Mammary epithelial cell (primary cell): ENCODE measurements at regions of chr11 and their contacts with region 1.

Region 1: DNA sequence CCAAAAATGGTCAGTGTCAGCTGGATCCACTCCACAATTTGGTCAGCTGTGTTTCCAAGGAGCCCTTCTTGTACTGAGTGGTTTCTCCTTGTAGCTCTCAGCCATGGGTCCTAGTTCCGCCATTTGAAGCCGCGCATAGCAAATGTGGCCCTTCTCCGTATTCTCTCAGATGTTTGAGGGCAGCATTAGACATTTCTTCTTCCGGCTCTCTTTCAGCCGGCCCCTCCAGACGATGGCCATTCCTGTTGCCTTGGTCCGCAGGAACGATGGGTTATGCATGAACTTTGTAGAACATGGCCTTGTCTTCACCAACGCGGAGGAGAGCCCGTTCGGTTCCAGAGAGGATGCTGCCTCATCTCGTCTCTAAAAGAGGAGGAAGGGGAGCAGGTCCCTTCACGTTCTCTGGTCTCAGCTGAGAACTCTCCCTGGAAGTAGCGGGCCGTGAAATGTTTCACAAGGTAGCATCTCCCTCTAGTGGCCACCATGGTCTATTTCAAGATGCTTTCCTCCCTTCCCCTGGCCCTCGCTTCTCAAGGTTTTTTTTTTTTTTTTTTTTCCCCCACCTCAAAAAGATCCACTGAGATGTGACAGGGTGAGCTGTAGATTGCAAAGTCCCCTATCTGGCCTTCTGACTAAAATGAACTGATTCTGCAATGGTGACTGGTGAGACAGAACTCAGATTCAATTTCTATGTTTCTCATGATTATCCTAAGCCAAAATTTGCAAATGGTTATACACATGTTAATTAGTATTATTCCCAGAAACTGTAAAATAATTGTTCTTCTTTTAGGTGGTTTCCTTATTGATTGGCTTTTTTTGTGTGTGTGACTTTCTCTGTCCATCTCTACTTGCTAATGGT is 19.8 kb upstream of the PLET1 start:
- DNase-seq: peak; percentile 68
- H3K4me3 ChIP-seq: peak overlapping the region; percentile 31 to 45 (median 39)
- H3K27ac ChIP-seq: no peak overlapping the region
- H3K4me1 ChIP-seq: peaks cover 12% of the 10 kb centered on the region
- H3K27me3 ChIP-seq: no peaks in the 10 kb centered on the region
- CTCF ChIP-seq: peak; percentile 74 to 86

Region 2: GRCh38 chr11:111878849-111879636 is 401.5 kb before region 1 on chr11 and contains the starts of genes CFAP68 and FDXACB1:
- CTCF ChIA-PET with region 1: no interaction called
- dilution Hi-C with region 1: no loop called
- in situ Hi-C with region 1: no loop called
- intact Hi-C with region 1: loop called (anchors 1 kb)
- DNase-seq: peak; percentile 98
- H3K4me3 ChIP-seq: peak within 1 kb of the TSS; percentile 69 to 91 (median 73)
- H3K27ac ChIP-seq: peak within 1 kb of the TSS; percentile 99
- H3K4me1 ChIP-seq: peaks cover 8% of the 10 kb centered on the region
- H3K27me3 ChIP-seq: no peaks in the 10 kb centered on the region
- CTCF ChIP-seq: peak; percentile 90 to 95
- total RNA-seq, gene CFAP68: 12.5 to 23.7 TPM
- total RNA-seq, gene FDXACB1: 0.96 to 2.3 TPM

Region 3: GRCh38 chr11:112086422-112087191 is 193.9 kb before region 1 on chr11 and contains the starts of genes SDHD and TIMM8B:
- CTCF ChIA-PET with region 1: no interaction called
- dilution Hi-C with region 1: no loop called
- in situ Hi-C with region 1: no loop called
- intact Hi-C with region 1: loop called (anchors 1 kb)
- DNase-seq: peak; percentile 95
- H3K4me3 ChIP-seq: peak within 1 kb of the TSS; percentile 93 to 98 (median 93)
- H3K27ac ChIP-seq: peak within 1 kb of the TSS; percentile 80
- H3K4me1 ChIP-seq: peaks cover 10% of the 10 kb centered on the region
- H3K27me3 ChIP-seq: no peaks in the 10 kb centered on the region
- CTCF ChIP-seq: peak in 1 of 2 donors; percentile 46
- total RNA-seq, gene SDHD: 57.7 to 58.5 TPM
- total RNA-seq, gene TIMM8B: 21.8 to 58.7 TPM

Region 4: GRCh38 chr11:112174789-112175598 is 105.5 kb before region 1 on chr11 and contains the start of gene BCO2:
- CTCF ChIA-PET with region 1: no interaction called
- dilution Hi-C with region 1: no loop called
- in situ Hi-C with region 1: no loop called
- intact Hi-C with region 1: loop called (anchors 1 kb)
- DNase-seq: peak; percentile 85
- H3K4me3 ChIP-seq: peak within 1 kb of the TSS; percentile 26 to 56 (median 47)
- H3K27ac ChIP-seq: peak within 1 kb of the TSS; percentile 88
- H3K4me1 ChIP-seq: peaks cover 10% of the 10 kb centered on the region
- H3K27me3 ChIP-seq: no peaks in the 10 kb centered on the region
- CTCF ChIP-seq: peak; percentile 91 to 97
- total RNA-seq, gene BCO2: 3.8 to 4.9 TPM

Region 5: GRCh38 chr11:112453601-112454577 is 173.4 kb after region 1 on chr11:
- CTCF ChIA-PET with region 1: no interaction called
- dilution Hi-C with region 1: no loop called
- in situ Hi-C with region 1: loop called in 1 of 2 experiments (anchors 10 kb)
- intact Hi-C with region 1: no loop called
- DNase-seq: peak; percentile 20
- H3K4me3 ChIP-seq: no peak overlapping the region
- H3K27ac ChIP-seq: no peak overlapping the region
- H3K4me1 ChIP-seq: no peaks in the 10 kb centered on the region
- H3K27me3 ChIP-seq: no peaks in the 10 kb centered on the region
- CTCF ChIP-seq: peak; percentile 58 to 65

Region 6: DNA sequence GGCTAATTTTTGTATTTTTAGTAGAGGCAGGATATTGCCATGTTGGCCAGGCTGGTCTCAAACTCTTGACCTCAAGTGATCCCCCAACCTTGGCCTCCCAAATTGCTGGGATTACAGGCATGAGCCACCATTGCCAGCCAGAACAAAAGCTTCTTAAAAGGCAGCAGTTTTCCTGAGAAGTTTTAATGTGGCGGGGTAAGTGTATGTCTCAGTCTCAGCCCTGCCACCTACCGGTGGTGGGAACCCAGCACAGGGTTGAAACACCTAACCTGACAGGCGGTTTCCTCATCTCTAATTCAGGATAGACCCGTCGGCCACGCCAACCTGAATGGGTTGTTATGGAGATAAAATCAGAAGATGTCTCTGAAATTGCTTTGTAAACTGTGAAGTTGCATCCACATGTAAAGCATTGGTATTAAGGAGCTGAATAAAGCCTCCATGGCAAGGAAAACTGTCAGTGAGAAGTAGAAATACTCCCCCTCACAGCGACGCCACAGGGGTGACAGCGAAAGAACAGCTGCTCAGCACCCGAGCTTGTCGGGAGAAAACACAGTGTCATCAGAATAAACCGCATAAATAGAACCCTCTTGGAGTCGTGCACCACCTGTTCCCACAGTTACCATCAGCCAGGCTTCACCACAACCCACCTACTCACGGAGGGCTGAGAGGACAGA is 514.8 kb after region 1 on chr11:
- CTCF ChIA-PET with region 1: no interaction called
- dilution Hi-C with region 1: no loop called
- in situ Hi-C with region 1: loop called in 1 of 2 experiments (anchors 25 kb)
- intact Hi-C with region 1: no loop called
- DNase-seq: peak; percentile 53
- H3K4me3 ChIP-seq: no peak overlapping the region
- H3K27ac ChIP-seq: no peak overlapping the region
- H3K4me1 ChIP-seq: no peaks in the 10 kb centered on the region
- H3K27me3 ChIP-seq: no peaks in the 10 kb centered on the region
- CTCF ChIP-seq: peak; percentile 87